ENCODE measurements at regions of chrX and their contacts with region 1.

Region 1: DNA sequence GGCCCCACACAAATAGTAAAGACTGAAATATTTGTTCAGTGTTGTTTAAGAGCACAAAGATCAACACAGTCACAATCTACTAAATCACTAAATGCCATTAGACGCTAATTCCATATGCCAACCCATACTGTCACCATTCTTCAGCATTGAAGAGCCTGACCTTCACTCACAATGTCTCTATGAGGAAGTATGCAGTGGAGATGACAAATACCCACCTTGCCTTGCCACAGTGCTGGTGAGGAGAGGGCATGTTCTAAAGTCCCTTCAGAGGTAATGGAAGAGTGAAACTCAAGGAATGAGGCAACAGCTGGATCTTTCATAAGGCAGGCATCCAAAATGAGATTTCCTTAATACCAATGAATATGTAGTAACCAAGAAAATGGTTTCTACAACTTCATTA is 50.4 kb downstream of the FRMD7 start:
- DNase-seq: peak; percentile 40
- ATAC-seq: peak; percentile 77
- H3K4me3 ChIP-seq: peak overlapping the region in 1 of 3 experiments; percentile 6; a peak in 2 of 6 replicates
- H3K27ac ChIP-seq: peak overlapping the region; percentile 71
- H3K4me1 ChIP-seq: peaks cover 36% of the 10 kb centered on the region
- H3K27me3 ChIP-seq: no peaks in the 10 kb centered on the region
- CTCF ChIP-seq: no peak
- EP300 ChIP-seq: no peak
- POLR2A ChIP-seq: no peak
- RAD21 ChIP-seq: no peak

Region 2: GRCh38 chrX:132022967-132023895 is 54.2 kb before region 1 on chrX and contains the start of gene STK26:
- CTCF ChIA-PET with region 1: no interaction called
- POLR2A ChIA-PET with region 1: no interaction called
- in situ Hi-C with region 1: no loop called
- intact Hi-C with region 1: loop called (anchors 5 kb)
- DNase-seq: peak; percentile 44
- ATAC-seq: peak; percentile 93
- H3K4me3 ChIP-seq: peak within 1 kb of the TSS; percentile 74 to 85 (median 81)
- H3K27ac ChIP-seq: peak within 1 kb of the TSS; percentile 78
- H3K4me1 ChIP-seq: peaks cover 28% of the 10 kb centered on the region
- H3K27me3 ChIP-seq: no peaks in the 10 kb centered on the region
- CTCF ChIP-seq: no peak
- EP300 ChIP-seq: no peak
- POLR2A ChIP-seq: peak; percentile 54 to 88
- RAD21 ChIP-seq: no peak
- total RNA-seq, gene STK26: 47.9 and 78.3 TPM in 2 replicates

Measured in HepG2 (cell line).